T-cell (primary cell): ENCODE measurements at regions of chr7 and their contacts with region 1.

Region 1: DNA sequence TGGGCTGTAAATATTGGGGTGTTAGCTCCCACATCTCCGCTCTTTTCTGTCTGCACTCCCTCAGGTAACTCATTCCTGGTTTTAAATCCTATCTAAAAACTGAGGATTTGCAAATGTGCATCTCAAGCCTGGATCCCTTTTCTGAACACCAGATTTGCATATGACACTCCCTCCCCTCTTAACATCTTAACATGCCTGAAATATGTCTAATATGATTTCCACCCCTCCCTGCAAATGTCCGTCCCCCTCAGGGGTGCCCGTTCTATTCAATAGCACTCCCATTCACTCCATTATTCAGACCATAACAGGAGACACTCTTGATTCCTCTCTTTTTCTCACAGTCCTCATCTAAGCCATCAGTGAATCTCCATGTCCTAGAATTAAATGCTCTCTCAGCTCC is 8.3 kb upstream of the CALD1 start:
- DNase-seq: no peak
- ATAC-seq: no peak
- H3K4me3 ChIP-seq: no peak overlapping the region
- H3K4me3 Mint-ChIP-seq: no peak overlapping the region
- H3K27ac ChIP-seq: no peak overlapping the region
- H3K27ac Mint-ChIP-seq: no peak overlapping the region
- H3K4me1 ChIP-seq: no peaks in the 10 kb centered on the region
- H3K4me1 Mint-ChIP-seq: peaks cover 0 to 2% (median 0%) of the 10 kb centered on the region in 3 donors
- H3K27me3 ChIP-seq: peaks cover 0 to 2% of the 10 kb centered on the region in 2 experiments
- H3K27me3 Mint-ChIP-seq: no peaks in the 10 kb centered on the region

Region 2: DNA sequence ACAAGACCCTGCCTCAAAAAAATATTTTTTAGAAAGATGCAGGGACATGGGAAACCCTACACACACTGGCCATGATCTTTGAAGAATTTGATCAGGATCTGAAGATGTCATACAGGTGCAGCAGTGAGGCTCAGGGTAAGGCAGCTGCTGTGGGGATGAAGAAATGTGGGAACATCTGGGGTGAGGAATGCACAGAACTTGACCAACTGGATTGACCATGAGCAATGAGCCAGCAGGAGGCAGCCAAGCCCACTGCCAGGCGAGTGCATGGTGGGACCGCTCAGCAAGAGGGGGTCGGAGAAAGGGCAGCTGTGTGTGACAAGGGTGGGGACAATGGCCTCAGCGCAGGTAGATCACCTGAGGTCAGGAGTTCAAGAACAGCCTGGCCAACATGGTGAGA is 367.4 kb before region 1 on chr7:
- CTCF ChIA-PET with region 1: no interaction called
- POLR2A ChIA-PET with region 1: no interaction called
- DNase-seq: no peak
- ATAC-seq: no peak
- H3K4me3 ChIP-seq: no peak overlapping the region
- H3K4me3 Mint-ChIP-seq: no peak overlapping the region
- H3K27ac ChIP-seq: no peak overlapping the region
- H3K27ac Mint-ChIP-seq: no peak overlapping the region
- H3K4me1 ChIP-seq: no peaks in the 10 kb centered on the region
- H3K4me1 Mint-ChIP-seq: no peaks in the 10 kb centered on the region
- H3K27me3 ChIP-seq: peaks cover 0 to 10% of the 10 kb centered on the region in 2 experiments
- H3K27me3 Mint-ChIP-seq: peaks cover 11 to 32% of the 10 kb centered on the region in 2 donors

Region 3: DNA sequence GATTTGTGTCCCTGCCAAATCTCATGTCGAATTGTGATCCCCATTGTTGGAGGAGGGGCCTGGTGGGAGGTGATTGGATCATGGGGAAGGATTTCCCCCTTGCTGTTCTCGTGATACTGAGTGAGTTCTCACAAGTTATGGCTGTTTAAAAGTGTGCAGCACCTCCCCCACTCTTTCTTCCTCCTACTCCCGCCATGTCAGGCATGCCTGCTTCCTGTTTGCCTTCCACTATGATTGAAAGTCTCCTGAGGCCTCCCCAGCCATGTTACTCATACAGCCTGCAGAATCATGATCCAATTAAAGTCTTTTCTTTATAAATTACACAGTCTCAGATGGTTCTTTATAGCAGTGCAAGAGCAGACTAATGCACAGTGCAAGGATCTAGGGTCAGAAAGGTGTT is 83.7 kb after region 1 on chr7:
- CTCF ChIA-PET with region 1: interaction called in 1 of 2 experiments, 10 read pairs
- POLR2A ChIA-PET with region 1: no interaction called
- DNase-seq: no peak
- ATAC-seq: no peak
- H3K4me3 ChIP-seq: no peak overlapping the region
- H3K4me3 Mint-ChIP-seq: peak overlapping the region in 1 of 3 donors; percentile 55
- H3K27ac ChIP-seq: no peak overlapping the region
- H3K27ac Mint-ChIP-seq: peak overlapping the region in 1 of 2 donors; percentile 53
- H3K4me1 ChIP-seq: peaks cover 8 to 12% of the 10 kb centered on the region in 2 experiments
- H3K4me1 Mint-ChIP-seq: peaks cover 27 to 48% (median 28%) of the 10 kb centered on the region in 3 donors
- H3K27me3 ChIP-seq: no peaks in the 10 kb centered on the region
- H3K27me3 Mint-ChIP-seq: no peaks in the 10 kb centered on the region